AG04449 (cell line): ENCODE measurements at regions of chr1 and their contacts with region 1.

Region 1: DNA sequence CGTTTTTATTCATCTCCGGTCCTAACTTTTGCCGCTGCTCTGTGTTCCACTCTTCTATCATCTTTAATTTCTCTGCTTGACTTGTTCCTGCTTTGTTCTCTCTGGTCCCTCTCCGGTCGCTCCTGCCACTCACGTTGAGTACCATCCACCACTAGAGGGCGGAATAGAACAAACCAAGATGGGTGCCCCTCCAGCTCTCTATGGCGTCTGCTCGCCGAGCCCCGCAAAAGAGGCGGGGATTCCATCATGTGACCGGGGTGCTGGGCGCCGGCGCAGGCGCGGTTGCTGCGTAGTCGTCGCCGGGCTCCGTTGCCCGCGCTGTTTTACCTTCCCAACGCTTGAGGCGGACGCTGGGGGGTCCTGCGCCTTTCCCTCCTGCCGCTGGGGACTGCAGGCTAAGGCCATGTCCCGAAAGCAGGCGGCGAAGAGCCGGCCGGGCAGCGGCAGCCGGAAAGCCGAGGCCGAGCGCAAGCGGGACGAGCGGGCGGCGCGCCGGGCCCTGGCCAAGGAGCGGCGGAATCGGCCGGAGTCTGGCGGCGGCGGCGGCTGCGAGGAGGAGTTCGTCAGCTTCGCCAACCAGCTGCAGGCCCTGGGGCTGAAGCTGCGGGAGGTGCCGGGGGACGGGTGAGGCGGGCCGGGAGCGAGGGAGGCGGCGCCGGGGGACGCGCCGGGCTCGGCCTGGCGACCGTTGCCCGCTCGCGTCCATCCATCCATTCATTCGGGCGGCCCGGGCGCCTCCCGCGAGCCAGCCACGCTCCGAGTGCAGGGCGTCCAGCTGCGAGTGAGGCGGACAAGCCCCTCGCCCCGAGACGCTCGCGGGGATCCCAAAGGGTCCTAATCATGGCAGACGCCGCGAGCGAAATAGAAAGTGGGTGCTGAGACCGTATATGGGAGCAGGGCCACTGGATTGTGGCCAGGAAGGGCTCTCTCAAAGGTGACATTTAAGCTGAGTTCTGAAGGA is at the start of gene OTUD3:
- DNase-seq: peak; percentile 78
- H3K4me3 ChIP-seq: peak within 1 kb of the TSS; percentile 75
- CTCF ChIP-seq: peak; percentile 87

Region 2: DNA sequence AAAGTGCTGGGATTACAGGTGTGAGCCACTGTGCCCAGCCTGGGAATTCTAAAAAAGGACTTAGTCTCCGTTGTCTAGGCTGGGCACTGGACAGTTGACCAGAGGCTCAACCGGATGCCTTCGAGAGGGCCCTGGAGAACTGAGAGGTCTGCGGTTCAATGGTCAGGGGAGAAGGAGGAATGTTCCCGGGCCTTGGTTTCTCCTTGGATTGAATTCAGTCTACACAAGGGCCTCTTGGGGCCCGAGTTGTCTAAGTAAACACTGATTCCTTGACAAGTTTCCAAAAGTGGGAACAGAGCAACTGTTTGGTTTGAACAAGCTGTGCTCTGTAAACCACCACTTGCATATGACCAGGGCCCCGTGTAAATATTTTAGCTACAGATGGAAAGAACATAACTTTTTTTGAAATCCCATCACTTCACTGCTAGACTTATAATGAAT is 368.0 kb before region 1 on chr1:
- CTCF ChIA-PET with region 1: no interaction called
- POLR2A ChIA-PET with region 1: no interaction called
- DNase-seq: no peak
- H3K4me3 ChIP-seq: no peak overlapping the region
- CTCF ChIP-seq: no peak

Region 3: GRCh38 chr1:19715334-19716203 is 166.8 kb before region 1 on chr1:
- CTCF ChIA-PET with region 1: interaction called, 39 read pairs
- POLR2A ChIA-PET with region 1: interaction called, 4 read pairs
- DNase-seq: peak; percentile 69
- H3K4me3 ChIP-seq: no peak overlapping the region
- CTCF ChIP-seq: peak; percentile 95

Region 4: DNA sequence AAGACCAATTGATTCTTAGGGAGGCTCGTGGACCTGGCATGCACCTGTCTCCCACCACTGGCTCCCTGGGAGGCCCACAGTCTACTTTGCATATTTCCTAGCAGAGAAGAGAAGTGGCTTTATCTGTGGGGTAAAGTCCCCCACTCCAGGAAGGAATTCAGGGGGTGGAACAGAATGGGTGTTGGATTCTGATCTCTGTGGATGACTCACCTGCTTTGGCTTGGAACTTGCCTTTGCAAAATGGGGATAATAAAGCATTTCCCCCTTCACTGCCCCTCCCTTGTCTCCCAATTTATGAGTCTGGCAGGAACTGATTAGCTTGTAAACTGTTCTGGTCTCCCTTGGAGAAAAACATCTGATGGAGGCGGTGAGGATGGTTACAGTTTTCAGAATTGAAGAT is 21.4 kb before region 1 on chr1:
- CTCF ChIA-PET with region 1: interaction called, 77 read pairs
- POLR2A ChIA-PET with region 1: no interaction called
- DNase-seq: no peak
- H3K4me3 ChIP-seq: no peak overlapping the region
- CTCF ChIP-seq: no peak

Region 5: GRCh38 chr1:19872190-19872589 is 10.2 kb before region 1 on chr1:
- CTCF ChIA-PET with region 1: interaction called, 77 read pairs
- POLR2A ChIA-PET with region 1: interaction called, 5 read pairs
- DNase-seq: no peak
- H3K4me3 ChIP-seq: no peak overlapping the region
- CTCF ChIP-seq: no peak

Region 6: GRCh38 chr1:19903600-19903999 is 21.2 kb after region 1 on chr1:
- CTCF ChIA-PET with region 1: interaction called, 13 read pairs
- POLR2A ChIA-PET with region 1: no interaction called
- DNase-seq: no peak
- H3K4me3 ChIP-seq: no peak overlapping the region
- CTCF ChIP-seq: no peak

Region 7: GRCh38 chr1:20151906-20152598 is 269.7 kb after region 1 on chr1:
- CTCF ChIA-PET with region 1: interaction called, 12 read pairs
- POLR2A ChIA-PET with region 1: no interaction called
- DNase-seq: no peak
- H3K4me3 ChIP-seq: peak overlapping the region; percentile 52
- CTCF ChIP-seq: peak; percentile 94